ENCODE measurements at regions of chr1 and their contacts with region 1.

Region 1: GRCh38 chr1:11967028-11967547 is 13.2 kb upstream of the MFN2 start:
- DNase-seq: no peak
- H3K4me3 ChIP-seq: no peak overlapping the region
- H3K27ac ChIP-seq: no peak overlapping the region
- H3K4me1 ChIP-seq: no peaks in the 10 kb centered on the region
- H3K27me3 ChIP-seq: no peaks in the 10 kb centered on the region
- CTCF ChIP-seq: peak; percentile 28 to 29

Region 2: GRCh38 chr1:11989669-11990068 is 22.6 kb after region 1 on chr1:
- intact Hi-C with region 1: loop called (anchors 1 kb)
- DNase-seq: no peak
- H3K4me3 ChIP-seq: no peak overlapping the region
- H3K27ac ChIP-seq: no peak overlapping the region
- H3K4me1 ChIP-seq: no peaks in the 10 kb centered on the region
- H3K27me3 ChIP-seq: no peaks in the 10 kb centered on the region
- CTCF ChIP-seq: no peak

Region 3: DNA sequence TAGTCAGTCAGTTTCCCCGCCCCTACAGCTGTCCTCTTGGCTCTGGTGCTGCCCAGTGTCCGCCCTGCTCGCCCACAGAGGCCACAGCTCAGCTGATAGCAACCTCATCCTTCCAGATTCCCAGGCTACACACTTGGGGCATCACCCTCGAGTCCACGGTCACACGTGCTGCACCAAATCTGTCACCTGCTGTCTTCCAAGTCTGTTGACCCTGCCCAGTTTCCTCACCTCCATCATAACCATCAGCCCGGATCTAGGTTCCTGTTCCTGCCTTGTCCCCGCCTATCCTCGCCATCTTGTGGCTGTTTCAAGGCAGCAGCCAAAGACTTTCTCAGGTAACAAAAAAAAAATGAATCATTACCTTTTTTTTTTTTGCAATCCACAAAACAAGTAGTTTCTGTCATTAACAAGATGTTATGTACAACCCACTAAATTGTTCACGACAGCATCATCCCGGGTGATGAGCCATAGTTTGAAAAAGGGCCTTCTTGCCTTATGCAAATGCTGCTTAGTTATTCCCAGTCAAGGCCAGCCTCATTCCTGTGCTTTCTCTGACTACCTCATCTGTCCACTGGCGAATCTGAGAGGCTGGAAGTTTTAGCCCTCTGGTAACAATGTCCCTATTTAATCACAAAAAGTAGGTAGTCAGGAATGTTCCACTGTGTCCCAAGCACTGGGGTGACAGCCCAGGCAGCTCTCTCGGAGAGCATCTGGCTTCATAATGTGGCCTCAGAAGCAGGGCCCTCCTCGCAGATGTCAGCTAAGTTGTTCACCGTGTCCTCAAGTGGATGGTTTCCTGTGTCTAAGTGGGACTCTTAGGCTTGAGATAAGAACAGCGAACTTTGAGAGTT is 47.3 kb after region 1 on chr1:
- intact Hi-C with region 1: no loop called
- DNase-seq: no peak
- H3K4me3 ChIP-seq: no peak overlapping the region
- H3K27ac ChIP-seq: no peak overlapping the region
- H3K4me1 ChIP-seq: peaks cover 0 to 3% (median 0%) of the 10 kb centered on the region in 4 donors
- H3K27me3 ChIP-seq: no peaks in the 10 kb centered on the region
- CTCF ChIP-seq: no peak

Region 4: DNA sequence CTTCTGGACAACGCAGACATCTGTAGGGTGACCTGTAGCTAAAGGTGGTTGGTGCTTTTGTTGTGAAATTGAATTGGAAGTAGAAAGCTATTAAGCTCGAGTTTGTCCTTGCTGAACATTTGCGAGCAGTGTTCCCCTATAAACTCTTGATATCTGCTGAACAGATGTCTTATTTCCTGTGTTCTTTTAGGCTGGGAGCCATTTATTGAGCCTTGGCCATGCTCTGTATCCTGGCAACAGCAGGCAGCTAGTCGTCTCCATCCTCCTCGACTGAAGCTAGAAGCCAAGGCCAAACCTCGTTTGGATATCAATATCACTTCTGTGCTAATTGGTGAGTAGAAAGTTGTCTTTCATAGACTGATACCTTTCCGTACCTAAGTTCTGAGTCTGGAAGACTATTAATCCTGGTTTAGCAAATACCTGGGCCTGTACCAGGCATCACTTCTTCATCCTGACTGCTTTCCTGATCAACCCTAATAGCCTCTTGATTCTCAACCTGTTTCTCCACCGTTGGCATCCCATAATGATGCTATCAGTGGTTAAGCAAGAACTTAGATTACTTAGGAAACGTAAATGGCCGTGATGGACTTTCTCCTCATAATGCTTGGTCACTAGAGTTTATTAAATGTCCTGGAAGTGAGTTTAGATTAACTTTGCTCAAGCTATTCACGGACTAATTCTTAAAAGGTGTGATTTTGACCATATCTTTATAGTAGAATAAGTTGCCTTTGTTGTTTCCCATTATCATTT is 366.1 kb after region 1 on chr1:
- intact Hi-C with region 1: no loop called
- DNase-seq: no peak
- H3K4me3 ChIP-seq: no peak overlapping the region
- H3K27ac ChIP-seq: no peak overlapping the region
- H3K4me1 ChIP-seq: peaks cover 0 to 23% (median 5%) of the 10 kb centered on the region in 4 donors
- H3K27me3 ChIP-seq: no peaks in the 10 kb centered on the region
- CTCF ChIP-seq: no peak

Region 5: GRCh38 chr1:12518931-12519692 is 552.0 kb after region 1 on chr1:
- intact Hi-C with region 1: no loop called
- DNase-seq: peak; percentile 90 to 94
- H3K4me3 ChIP-seq: peak overlapping the region; percentile 2 to 21
- H3K27ac ChIP-seq: peak overlapping the region; percentile 51 to 66
- H3K4me1 ChIP-seq: peaks cover 5 to 18% (median 15%) of the 10 kb centered on the region in 4 donors
- H3K27me3 ChIP-seq: no peaks in the 10 kb centered on the region
- CTCF ChIP-seq: no peak